ENCODE measurements at regions of chr4 and their contacts with region 1.

Region 1: GRCh38 chr4:77075869-77076799 is at the start of gene CCNI:
- DNase-seq: peak; percentile 94
- H3K4me3 Mint-ChIP-seq: peak within 1 kb of the TSS; percentile 93
- H3K27ac Mint-ChIP-seq: no peak within 1 kb of the TSS
- H3K4me1 Mint-ChIP-seq: peaks cover 26% of the 10 kb centered on the region
- H3K27me3 Mint-ChIP-seq: no peaks in the 10 kb centered on the region
- total RNA-seq, gene CCNI: 259 to 264 TPM

Region 2: DNA sequence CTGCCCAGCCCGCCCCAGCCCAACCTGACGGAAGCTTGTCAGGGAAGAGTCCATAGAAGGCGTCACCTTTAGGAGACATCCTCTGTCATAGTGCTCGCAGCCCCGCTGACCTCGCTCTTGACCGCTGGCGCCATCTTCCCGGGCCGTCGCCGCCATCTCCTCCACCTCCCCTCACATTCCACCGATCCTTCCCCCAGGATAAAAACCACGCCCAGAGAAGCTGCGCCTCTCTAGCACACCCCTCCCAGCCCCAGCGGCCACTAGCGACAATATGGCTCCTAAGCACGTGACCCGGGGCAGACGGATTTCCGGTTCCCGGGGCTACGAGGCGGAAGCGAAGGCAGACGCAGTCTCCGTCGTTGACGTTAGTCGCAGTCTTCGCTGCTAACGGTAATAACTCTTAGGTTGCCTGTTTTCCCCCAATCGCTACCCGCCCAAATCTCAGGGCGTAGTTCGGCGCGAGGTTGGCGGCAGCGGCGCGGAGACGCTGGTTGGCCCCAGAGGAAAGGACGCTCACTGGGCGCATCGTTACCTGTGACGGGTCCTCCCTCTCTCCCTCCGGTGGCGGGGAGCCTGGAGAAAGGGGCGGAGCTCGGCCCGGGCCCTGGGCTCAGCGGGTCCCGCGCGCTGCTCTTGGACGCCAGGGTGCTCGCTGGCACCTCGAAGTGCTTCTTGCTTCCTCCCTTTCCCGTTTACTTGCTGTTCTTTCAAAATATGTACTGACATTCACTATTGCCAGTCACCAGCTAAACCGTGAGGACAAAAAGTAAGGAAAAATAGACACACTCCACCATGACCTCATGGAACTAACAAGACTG is 1561.8 kb before region 1 on chr4 and contains the starts of genes RCHY1 and THAP6:
- CTCF ChIA-PET with region 1: no interaction called
- POLR2A ChIA-PET with region 1: no interaction called
- intact Hi-C with region 1: loop called (anchors 5 kb)
- DNase-seq: peak; percentile 95
- H3K4me3 Mint-ChIP-seq: no peak within 1 kb of the TSS
- H3K27ac Mint-ChIP-seq: peak within 1 kb of the TSS; percentile 98
- H3K4me1 Mint-ChIP-seq: peaks cover 52% of the 10 kb centered on the region
- H3K27me3 Mint-ChIP-seq: no peaks in the 10 kb centered on the region
- total RNA-seq, gene RCHY1: 30.0 to 32.4 TPM
- total RNA-seq, gene THAP6: 19.4 to 20.7 TPM

Region 3: DNA sequence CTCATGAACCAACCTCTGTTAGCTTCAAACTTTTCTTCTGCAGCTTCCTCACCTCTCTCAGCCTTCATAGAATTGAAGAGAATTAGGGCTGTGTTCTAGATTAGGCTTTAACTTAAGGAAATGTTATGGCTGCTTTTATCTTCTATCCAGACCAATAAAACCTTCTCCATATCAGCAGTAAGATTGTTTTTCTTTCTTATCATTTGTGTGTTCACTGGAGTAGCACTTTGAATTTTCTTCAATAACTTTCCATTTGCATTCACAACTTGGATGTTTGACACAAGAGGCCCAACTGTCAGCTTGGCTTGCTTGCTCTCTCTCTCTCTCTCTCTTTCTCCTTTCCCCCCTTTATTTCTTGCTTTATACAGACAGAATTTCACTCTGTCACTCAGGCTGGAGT is 155.4 kb before region 1 on chr4:
- CTCF ChIA-PET with region 1: no interaction called
- POLR2A ChIA-PET with region 1: no interaction called
- intact Hi-C with region 1: no loop called
- DNase-seq: no peak
- H3K4me3 Mint-ChIP-seq: no peak overlapping the region
- H3K27ac Mint-ChIP-seq: no peak overlapping the region
- H3K4me1 Mint-ChIP-seq: no peaks in the 10 kb centered on the region
- H3K27me3 Mint-ChIP-seq: no peaks in the 10 kb centered on the region

Region 4: GRCh38 chr4:76993787-76994641 is 82.1 kb before region 1 on chr4:
- CTCF ChIA-PET with region 1: no interaction called
- POLR2A ChIA-PET with region 1: no interaction called
- intact Hi-C with region 1: loop called (anchors 1 kb)
- DNase-seq: peak; percentile 73
- H3K4me3 Mint-ChIP-seq: peak overlapping the region; percentile 11
- H3K27ac Mint-ChIP-seq: no peak overlapping the region
- H3K4me1 Mint-ChIP-seq: peaks cover 53% of the 10 kb centered on the region
- H3K27me3 Mint-ChIP-seq: peaks cover 5% of the 10 kb centered on the region

Region 5: GRCh38 chr4:77095101-77095821 is 19.1 kb after region 1 on chr4:
- CTCF ChIA-PET with region 1: interaction called, 21 read pairs
- POLR2A ChIA-PET with region 1: no interaction called
- intact Hi-C with region 1: loop called (anchors 1 kb)
- DNase-seq: peak; percentile 83
- H3K4me3 Mint-ChIP-seq: no peak overlapping the region
- H3K27ac Mint-ChIP-seq: no peak overlapping the region
- H3K4me1 Mint-ChIP-seq: peaks cover 14% of the 10 kb centered on the region
- H3K27me3 Mint-ChIP-seq: no peaks in the 10 kb centered on the region

Region 6: DNA sequence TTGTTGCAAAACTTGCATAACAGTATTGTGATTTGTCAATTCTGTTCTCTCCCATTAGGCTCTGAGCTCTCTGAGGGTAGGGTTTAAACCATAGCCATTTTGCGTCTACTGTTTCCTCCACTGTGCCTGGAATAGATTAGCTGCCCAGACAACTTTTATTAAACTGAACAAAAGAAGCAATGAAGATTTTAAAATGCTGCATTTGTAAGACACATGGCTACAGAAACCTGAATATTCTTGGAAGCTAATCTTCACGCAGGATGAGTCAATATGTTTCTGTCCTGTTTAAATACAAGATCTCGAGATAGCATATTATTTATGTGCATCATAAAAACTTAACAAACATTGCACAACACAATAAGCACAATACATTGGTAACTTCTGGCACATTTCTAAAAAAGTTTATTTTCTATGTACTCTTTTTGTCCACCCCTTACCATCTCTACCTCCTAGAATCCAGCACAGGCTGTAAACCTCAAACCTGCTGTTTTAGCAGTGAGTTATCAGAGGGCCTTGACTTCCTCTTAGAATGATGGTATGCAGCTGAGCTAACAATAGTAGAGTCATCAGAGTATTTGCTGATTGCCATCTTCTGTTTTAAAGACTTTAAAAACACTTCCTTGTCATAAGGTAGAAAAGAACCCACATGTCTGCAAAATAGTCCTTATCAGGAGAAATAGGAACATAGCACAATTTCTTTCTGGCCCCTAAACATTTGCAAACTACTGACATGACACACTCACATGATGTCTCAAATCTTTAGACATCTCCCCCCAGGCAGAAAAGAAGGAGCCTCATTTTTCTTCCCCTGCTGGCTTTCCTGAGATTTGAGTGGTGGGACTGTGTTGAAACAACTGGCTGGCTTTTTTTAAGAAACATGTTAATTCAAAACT is 70.3 kb after region 1 on chr4:
- CTCF ChIA-PET with region 1: no interaction called
- POLR2A ChIA-PET with region 1: no interaction called
- intact Hi-C with region 1: no loop called
- DNase-seq: no peak
- H3K4me3 Mint-ChIP-seq: no peak overlapping the region
- H3K27ac Mint-ChIP-seq: peak overlapping the region; percentile 23
- H3K4me1 Mint-ChIP-seq: peaks cover 17% of the 10 kb centered on the region
- H3K27me3 Mint-ChIP-seq: no peaks in the 10 kb centered on the region

Region 7: DNA sequence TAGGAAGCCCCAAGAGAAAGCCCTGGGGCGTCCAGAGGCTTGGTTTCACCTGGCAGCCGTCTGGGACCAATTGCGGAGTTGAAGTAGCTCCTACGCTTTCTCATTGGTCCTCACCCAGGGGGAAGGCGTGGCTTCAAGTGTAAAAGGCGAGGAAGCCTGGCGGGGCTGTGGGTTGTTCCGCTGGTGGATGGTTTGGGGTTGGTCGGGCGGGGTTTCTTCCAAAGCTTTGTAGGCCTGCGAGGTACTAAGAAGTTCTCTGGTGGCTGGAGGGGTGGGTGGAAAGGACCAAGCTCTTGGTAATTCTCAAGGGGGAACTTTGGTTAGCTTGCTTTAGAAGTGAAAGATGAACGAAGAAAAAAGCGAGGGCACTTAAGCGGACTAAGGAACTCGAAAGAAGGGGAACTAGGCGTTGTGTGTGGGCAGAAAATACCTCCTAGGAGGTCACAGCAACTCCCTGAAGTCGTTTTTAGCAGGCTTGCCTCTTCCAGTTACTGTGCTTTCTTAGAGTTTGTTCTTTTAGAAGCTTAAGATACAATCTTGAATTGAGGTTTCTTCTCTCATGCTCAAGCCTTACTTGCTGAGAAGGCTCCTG is 117.5 kb after region 1 on chr4:
- CTCF ChIA-PET with region 1: no interaction called
- POLR2A ChIA-PET with region 1: no interaction called
- intact Hi-C with region 1: loop called (anchors 1 kb)
- DNase-seq: peak; percentile 85
- H3K4me3 Mint-ChIP-seq: peak overlapping the region; percentile 82
- H3K27ac Mint-ChIP-seq: peak overlapping the region; percentile 81
- H3K4me1 Mint-ChIP-seq: peaks cover 18% of the 10 kb centered on the region
- H3K27me3 Mint-ChIP-seq: peaks cover 2% of the 10 kb centered on the region

Region 8: DNA sequence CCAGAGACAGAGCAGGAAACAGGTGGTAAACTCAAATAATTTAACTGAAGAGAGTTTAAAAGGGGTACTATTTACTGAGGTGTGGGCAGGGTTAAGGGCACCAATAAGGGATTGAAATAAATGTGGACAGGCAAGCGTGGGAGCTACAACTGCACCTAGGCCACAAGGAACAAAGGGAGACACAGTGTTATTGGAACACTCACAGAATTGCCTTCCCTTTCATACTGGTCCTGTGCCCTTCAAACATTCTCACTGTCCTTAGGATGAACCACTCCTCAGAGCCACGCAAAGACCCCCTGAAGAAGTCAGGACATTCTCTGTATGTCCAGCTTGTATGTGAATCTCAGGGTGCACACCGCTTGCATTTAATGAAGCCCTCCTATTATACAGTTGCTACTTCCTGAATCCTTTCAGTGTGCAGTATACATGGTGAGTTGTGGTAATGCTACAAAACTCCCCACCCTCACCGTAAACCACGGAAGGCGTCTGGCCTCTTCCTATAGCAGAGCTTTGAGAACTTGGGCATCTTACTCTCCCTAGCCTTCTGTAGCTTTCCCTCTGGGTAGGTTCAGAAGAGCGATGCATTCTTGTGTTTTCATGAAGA is 776.9 kb after region 1 on chr4:
- CTCF ChIA-PET with region 1: no interaction called
- POLR2A ChIA-PET with region 1: no interaction called
- intact Hi-C with region 1: loop called (anchors 5 kb)
- DNase-seq: peak; percentile 83
- H3K4me3 Mint-ChIP-seq: peak overlapping the region; percentile 68
- H3K27ac Mint-ChIP-seq: peak overlapping the region; percentile 98
- H3K4me1 Mint-ChIP-seq: peaks cover 57% of the 10 kb centered on the region
- H3K27me3 Mint-ChIP-seq: no peaks in the 10 kb centered on the region

Measured in activated CD4-positive, alpha-beta memory T cell treated with anti-CD3 and anti-CD28 coated beads for 36 hours (primary cell).